ENCODE measurements at regions of chr2 and their contacts with region 1.

Region 1: DNA sequence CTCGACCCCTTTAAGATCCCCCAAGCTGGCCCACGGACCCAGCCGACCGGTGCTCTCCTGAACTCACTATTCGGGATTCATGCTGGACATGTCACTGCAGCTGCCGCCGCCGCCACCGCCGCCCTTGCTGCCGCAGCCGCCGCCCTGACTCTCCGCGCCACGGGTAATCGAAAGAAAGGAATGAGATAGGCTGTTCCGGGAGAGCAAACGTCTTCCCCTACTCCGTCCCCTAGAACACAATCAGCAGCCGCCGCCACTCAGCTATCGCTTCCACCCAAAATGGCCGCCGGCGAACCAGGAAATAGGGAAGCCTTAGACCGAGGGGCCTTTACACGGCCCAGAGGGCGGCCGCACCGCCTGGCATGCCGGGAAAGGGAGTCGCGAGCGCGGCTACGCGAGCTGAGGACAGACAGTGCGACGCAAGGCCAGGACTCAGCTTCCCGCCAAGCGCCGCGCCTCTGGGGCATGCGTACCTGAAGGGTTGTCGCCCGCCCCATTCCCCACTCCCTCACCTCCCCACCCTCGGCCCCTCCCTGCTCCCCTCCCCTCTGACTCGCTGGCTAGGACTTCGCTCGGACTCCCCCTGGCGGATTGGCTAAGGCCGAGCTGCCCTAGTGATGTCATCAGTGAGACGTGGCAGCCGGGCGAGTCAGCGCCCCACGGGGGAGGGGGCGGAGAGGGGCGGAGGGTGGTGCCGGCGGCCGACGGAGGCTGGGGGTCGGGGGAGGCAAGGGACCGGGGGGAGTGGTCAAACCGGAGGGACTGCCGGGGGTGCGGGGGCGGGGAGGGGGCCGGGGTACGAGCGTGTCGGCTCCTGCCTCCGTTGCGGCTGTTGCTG is at the start of gene RAB1A:
- DNase-seq: peak; percentile 100
- H3K4me3 ChIP-seq: peak within 1 kb of the TSS; percentile 75
- H3K27ac ChIP-seq: peak within 1 kb of the TSS; percentile 94
- H3K4me1 ChIP-seq: no peaks in the 10 kb centered on the region
- H3K27me3 ChIP-seq: no peaks in the 10 kb centered on the region
- CTCF ChIP-seq: peak; percentile 11
- total RNA-seq, gene RAB1A: 187 to 212 TPM

Region 2: GRCh38 chr2:65070172-65070830 is 59.7 kb before region 1 on chr2:
- intact Hi-C with region 1: loop called (anchors 10 kb)
- DNase-seq: peak; percentile 41
- H3K4me3 ChIP-seq: no peak overlapping the region
- H3K27ac ChIP-seq: peak overlapping the region; percentile 40
- H3K4me1 ChIP-seq: peaks cover 6% of the 10 kb centered on the region
- H3K27me3 ChIP-seq: no peaks in the 10 kb centered on the region
- CTCF ChIP-seq: no peak